ENCODE measurements at regions of chr11 and their contacts with region 1.

Region 1: DNA sequence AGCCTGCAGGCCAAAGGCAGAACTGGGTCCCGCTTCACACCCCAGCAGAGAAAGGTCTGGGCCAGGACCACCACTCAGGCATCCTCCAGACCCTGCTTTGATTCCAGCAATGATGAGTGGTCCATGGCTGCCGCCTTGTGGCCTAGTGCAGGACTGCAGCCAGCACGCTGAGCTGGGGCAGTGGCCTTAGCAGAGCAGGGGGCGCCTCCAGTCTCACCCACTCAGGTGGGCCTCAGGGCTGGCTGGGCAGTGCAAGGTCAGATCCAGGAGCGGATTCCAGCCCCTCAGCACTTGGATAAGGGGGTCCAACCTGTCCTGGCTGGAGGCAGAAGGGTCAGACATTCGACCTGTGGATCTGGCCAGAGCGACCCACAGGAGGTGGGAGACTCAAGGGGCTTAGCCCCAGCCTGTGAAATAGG is 9.6 kb upstream of the PDE2A start:
- DNase-seq: peak; percentile 54
- H3K4me3 ChIP-seq: no peak overlapping the region
- H3K27ac ChIP-seq: no peak overlapping the region
- H3K4me1 ChIP-seq: no peaks in the 10 kb centered on the region
- H3K27me3 ChIP-seq: peaks cover 0 to 2% of the 10 kb centered on the region in 2 experiments
- CTCF ChIP-seq: peak; percentile 97
- POLR2A ChIP-seq: no peak

Region 2: GRCh38 chr11:72483412-72484186 is 200.2 kb before region 1 on chr11:
- CTCF ChIA-PET with region 1: interaction called, 23 read pairs
- POLR2A ChIA-PET with region 1: no interaction called
- dilution Hi-C with region 1: no loop called
- intact Hi-C with region 1: loop called (anchors 1 kb)
- DNase-seq: peak; percentile 92
- H3K4me3 ChIP-seq: no peak overlapping the region
- H3K27ac ChIP-seq: peak overlapping the region; percentile 55
- H3K4me1 ChIP-seq: peaks cover 10% of the 10 kb centered on the region
- H3K27me3 ChIP-seq: peaks cover 10 to 11% of the 10 kb centered on the region in 2 experiments
- CTCF ChIP-seq: no peak
- POLR2A ChIP-seq: no peak

Region 3: GRCh38 chr11:72609045-72609444 is 74.7 kb before region 1 on chr11:
- CTCF ChIA-PET with region 1: interaction called, 19 read pairs
- POLR2A ChIA-PET with region 1: no interaction called
- dilution Hi-C with region 1: no loop called
- intact Hi-C with region 1: no loop called
- DNase-seq: peak; percentile 21
- H3K4me3 ChIP-seq: no peak overlapping the region
- H3K27ac ChIP-seq: no peak overlapping the region
- H3K4me1 ChIP-seq: no peaks in the 10 kb centered on the region
- H3K27me3 ChIP-seq: no peaks in the 10 kb centered on the region
- CTCF ChIP-seq: peak; percentile 56 to 58
- POLR2A ChIP-seq: no peak

Region 4: DNA sequence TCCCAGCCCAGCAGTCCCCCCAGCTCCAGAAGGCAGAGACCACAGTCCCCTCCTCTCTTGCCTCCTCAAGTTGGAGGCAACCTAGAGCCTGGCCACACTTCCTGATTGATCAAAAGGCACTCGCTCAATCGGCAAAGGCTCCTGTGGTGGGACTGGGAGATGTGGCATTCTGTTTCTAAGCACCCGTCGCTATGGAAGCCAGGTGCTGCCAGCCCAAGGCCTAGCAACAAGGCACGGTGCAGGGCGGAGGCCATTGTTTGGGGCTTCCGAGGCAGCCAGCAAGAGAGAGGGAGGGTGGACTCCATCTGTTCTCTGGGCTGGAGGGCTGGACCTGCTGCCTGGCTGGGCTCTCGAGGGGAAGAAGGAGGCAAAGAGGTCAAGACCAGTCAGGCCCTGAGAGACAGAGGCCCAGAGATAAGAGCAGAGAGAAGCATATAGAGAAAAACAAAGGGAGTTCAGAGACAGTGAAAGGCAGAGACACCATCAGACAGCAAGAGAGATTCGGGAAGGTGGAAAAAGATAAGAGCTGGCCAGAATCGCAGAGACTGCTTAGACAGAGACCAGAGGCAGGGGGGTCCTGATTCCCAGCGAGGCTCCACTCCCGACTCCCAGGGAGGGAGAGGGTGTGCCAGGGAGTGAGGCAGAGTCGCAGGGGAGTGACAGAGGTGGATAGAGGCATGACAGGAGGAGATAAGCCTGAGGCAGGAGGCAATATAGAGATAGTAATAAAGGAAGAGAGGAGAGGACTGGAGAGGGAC is 30.7 kb before region 1 on chr11:
- CTCF ChIA-PET with region 1: interaction called, 19 read pairs
- POLR2A ChIA-PET with region 1: no interaction called
- dilution Hi-C with region 1: no loop called
- intact Hi-C with region 1: no loop called
- DNase-seq: no peak
- H3K4me3 ChIP-seq: no peak overlapping the region
- H3K27ac ChIP-seq: no peak overlapping the region
- H3K4me1 ChIP-seq: no peaks in the 10 kb centered on the region
- H3K27me3 ChIP-seq: no peaks in the 10 kb centered on the region
- CTCF ChIP-seq: no peak
- POLR2A ChIP-seq: no peak

Region 5: GRCh38 chr11:72793425-72794367 is 109.9 kb after region 1 on chr11 and contains the start of gene STARD10:
- CTCF ChIA-PET with region 1: interaction called, 11 read pairs
- POLR2A ChIA-PET with region 1: no interaction called
- dilution Hi-C with region 1: no loop called
- intact Hi-C with region 1: no loop called
- DNase-seq: peak; percentile 96
- H3K4me3 ChIP-seq: peak within 1 kb of the TSS; percentile 66 to 85 (median 71)
- H3K27ac ChIP-seq: peak within 1 kb of the TSS; percentile 84
- H3K4me1 ChIP-seq: peaks cover 3% of the 10 kb centered on the region
- H3K27me3 ChIP-seq: no peaks in the 10 kb centered on the region
- CTCF ChIP-seq: peak; percentile 99
- POLR2A ChIP-seq: peak; percentile 75
- total RNA-seq, gene STARD10: 14.4 and 16.1 TPM in 2 replicates

Region 6: DNA sequence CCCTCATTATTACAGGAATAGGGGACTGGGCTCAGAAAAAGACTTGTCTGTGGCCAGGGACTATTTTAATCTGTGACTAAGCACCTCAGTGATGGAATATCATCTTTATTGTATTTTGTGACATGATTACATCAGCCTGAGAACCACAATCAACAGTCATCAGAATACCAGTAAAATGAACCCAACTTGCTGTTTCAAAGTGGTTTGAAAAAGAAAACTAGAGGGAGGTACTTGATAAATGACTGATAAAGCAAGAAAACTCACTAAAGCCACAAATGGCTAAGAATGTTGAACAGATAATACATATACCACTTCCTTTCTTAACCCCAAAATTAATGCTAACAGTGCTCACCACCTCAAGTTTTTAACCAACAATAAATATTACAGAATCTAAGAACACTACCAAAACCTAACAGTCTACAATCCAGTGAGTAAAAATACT is 286.1 kb after region 1 on chr11:
- CTCF ChIA-PET with region 1: no interaction called
- POLR2A ChIA-PET with region 1: no interaction called
- dilution Hi-C with region 1: no loop called
- intact Hi-C with region 1: no loop called
- DNase-seq: peak; percentile 53
- H3K4me3 ChIP-seq: no peak overlapping the region
- H3K27ac ChIP-seq: no peak overlapping the region
- H3K4me1 ChIP-seq: peaks cover 17% of the 10 kb centered on the region
- H3K27me3 ChIP-seq: no peaks in the 10 kb centered on the region
- CTCF ChIP-seq: no peak
- POLR2A ChIP-seq: no peak